CD4-positive, alpha-beta T cell (primary cell): ENCODE measurements at regions of chr1 and their contacts with region 1.

Region 1: DNA sequence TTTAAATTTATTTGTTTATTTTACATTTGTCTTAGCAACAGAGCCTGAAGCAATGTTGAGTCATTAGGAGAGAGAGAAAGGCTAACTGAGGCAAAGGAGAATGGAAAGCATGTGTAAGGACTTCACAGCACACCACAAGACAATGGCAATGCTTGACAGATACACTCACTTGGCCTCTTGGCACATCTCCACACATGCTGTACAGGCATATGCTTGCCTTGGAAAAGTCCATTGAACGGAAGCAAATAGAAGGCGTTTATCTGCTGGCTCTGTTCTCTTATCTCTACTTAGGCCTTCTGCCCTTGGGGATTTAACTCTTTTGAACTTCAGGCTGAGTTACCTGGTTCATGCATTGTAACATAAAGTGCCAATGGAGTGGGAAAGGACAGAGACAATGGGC is 262.2 kb upstream of the POU3F1 start:
- DNase-seq: no peak
- ATAC-seq: no peak
- H3K4me3 ChIP-seq: no peak overlapping the region
- H3K4me3 Mint-ChIP-seq: no peak overlapping the region
- H3K27ac ChIP-seq: no peak overlapping the region
- H3K27ac Mint-ChIP-seq: no peak overlapping the region
- H3K4me1 ChIP-seq: no peaks in the 10 kb centered on the region
- H3K4me1 Mint-ChIP-seq: no peaks in the 10 kb centered on the region
- H3K27me3 ChIP-seq: peaks cover 4 to 11% of the 10 kb centered on the region in 2 experiments
- H3K27me3 Mint-ChIP-seq: peaks cover 56% of the 10 kb centered on the region
- CTCF ChIP-seq: no peak

Region 2: GRCh38 chr1:36709869-36710481 is 1598.8 kb before region 1 on chr1:
- CTCF ChIA-PET with region 1: no interaction called
- POLR2A ChIA-PET with region 1: no interaction called
- intact Hi-C with region 1: loop called in 1 of 2 experiments (anchors 10 kb)
- DNase-seq: no peak
- ATAC-seq: no peak
- H3K4me3 ChIP-seq: no peak overlapping the region
- H3K4me3 Mint-ChIP-seq: no peak overlapping the region
- H3K27ac ChIP-seq: no peak overlapping the region
- H3K27ac Mint-ChIP-seq: no peak overlapping the region
- H3K4me1 ChIP-seq: no peaks in the 10 kb centered on the region
- H3K4me1 Mint-ChIP-seq: no peaks in the 10 kb centered on the region
- H3K27me3 ChIP-seq: peaks cover 15 to 50% of the 10 kb centered on the region in 2 experiments
- H3K27me3 Mint-ChIP-seq: peaks cover 83% of the 10 kb centered on the region
- CTCF ChIP-seq: no peak

Region 3: GRCh38 chr1:38598118-38598517 is 289.3 kb after region 1 on chr1:
- CTCF ChIA-PET with region 1: no interaction called
- POLR2A ChIA-PET with region 1: no interaction called
- intact Hi-C with region 1: loop called in 1 of 2 experiments (anchors 10 kb)
- DNase-seq: no peak
- ATAC-seq: no peak
- H3K4me3 ChIP-seq: no peak overlapping the region
- H3K4me3 Mint-ChIP-seq: no peak overlapping the region
- H3K27ac ChIP-seq: no peak overlapping the region
- H3K27ac Mint-ChIP-seq: no peak overlapping the region
- H3K4me1 ChIP-seq: no peaks in the 10 kb centered on the region
- H3K4me1 Mint-ChIP-seq: no peaks in the 10 kb centered on the region
- H3K27me3 ChIP-seq: peaks cover 8 to 11% of the 10 kb centered on the region in 2 experiments
- H3K27me3 Mint-ChIP-seq: peaks cover 15% of the 10 kb centered on the region
- CTCF ChIP-seq: no peak